Heart left ventricle (tissue), 16 donors: ENCODE measurements at regions of chr3 and their contacts with region 1.

Region 1: GRCh38 chr3:46976326-46977190 is at the start of gene CCDC12:
- DNase-seq: peak; percentile 93 to 97 (median 96)
- ATAC-seq: peak; percentile 89 to 93 (median 93)
- H3K4me3 ChIP-seq: peak within 1 kb of the TSS; percentile 50 to 88 (median 79)
- H3K27ac ChIP-seq: peak within 1 kb of the TSS; percentile 77 to 97 (median 92)
- H3K4me1 ChIP-seq: peaks cover 4 to 80% (median 51%) of the 10 kb centered on the region in 12 donors
- H3K27me3 ChIP-seq: no peaks in the 10 kb centered on the region
- CTCF ChIP-seq: no peak
- POLR2A ChIP-seq: peak in 1 of 2 donors; percentile 62
- total RNA-seq, gene CCDC12: 27.1 to 36.8 (median 33.3) TPM

Region 2: DNA sequence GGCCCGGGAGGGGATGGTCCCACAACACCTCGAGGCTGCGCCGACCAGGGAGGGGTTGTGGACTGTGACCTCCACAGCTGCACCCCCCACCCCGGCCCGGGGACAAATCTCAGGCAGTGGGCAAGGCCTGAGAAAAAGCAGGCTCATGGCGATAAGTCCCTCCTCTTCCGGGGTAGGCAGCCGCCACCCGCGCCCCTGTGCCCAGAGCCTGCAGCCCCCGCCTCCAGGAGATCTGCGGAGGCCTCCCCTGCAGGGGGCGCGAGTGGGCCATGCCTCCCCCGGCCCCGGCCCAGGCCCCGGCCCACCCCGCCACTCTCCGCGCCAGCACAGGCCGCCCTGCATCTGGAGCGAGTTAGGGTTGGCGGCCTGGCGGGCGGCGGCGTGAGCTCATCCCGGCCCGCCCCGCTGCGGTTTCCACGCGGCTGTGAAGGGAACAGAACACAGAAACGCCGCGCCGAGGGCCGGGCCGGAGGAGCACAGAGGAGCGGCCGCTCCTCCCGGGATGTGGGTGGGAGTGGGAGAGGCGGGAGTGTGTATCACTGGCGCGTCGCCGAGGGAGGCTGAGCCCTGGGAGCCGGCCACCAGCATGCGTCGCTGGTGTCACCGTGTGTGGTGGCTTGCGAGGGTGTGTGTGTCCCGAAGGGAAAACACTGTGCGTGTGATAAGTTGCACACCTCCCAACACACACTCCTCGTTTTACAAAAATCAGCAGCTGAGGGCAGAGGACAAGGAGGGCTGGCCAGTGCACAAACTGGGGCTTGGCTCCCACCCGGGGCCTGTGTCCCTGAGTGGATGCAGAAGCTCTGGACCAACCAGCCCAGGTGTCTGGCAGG is 130.6 kb before region 1 on chr3:
- intact Hi-C with region 1: no loop called
- DNase-seq: peak; percentile 71 to 90 (median 81)
- ATAC-seq: peak; percentile 6 to 54 (median 39)
- H3K4me3 ChIP-seq: peak overlapping the region; percentile 25 to 65 (median 52)
- H3K27ac ChIP-seq: peak overlapping the region in 11 of 12 donors; percentile 11 to 85 (median 77)
- H3K4me1 ChIP-seq: peaks cover 0 to 50% (median 31%) of the 10 kb centered on the region in 12 donors
- H3K27me3 ChIP-seq: no peaks in the 10 kb centered on the region
- CTCF ChIP-seq: peak; percentile 35 to 75 (median 56)
- POLR2A ChIP-seq: no peak

Region 3: GRCh38 chr3:46866720-46867549 is 109.6 kb before region 1 on chr3:
- intact Hi-C with region 1: loop called in 1 of 10 experiments (anchors 5 kb)
- DNase-seq: peak; percentile 80 to 93 (median 86)
- ATAC-seq: peak in 3 of 4 donors; percentile 8 to 32 (median 18)
- H3K4me3 ChIP-seq: no peak overlapping the region
- H3K27ac ChIP-seq: peak overlapping the region; percentile 63 to 100 (median 86)
- H3K4me1 ChIP-seq: peaks cover 13 to 78% (median 38%) of the 10 kb centered on the region in 12 donors
- H3K27me3 ChIP-seq: no peaks in the 10 kb centered on the region
- CTCF ChIP-seq: peak; percentile 83 to 93 (median 88)
- POLR2A ChIP-seq: no peak

Region 4: GRCh38 chr3:46923559-46924350 is 52.8 kb before region 1 on chr3:
- intact Hi-C with region 1: loop called in 4 of 10 experiments (anchors 2 to 5 kb)
- DNase-seq: peak in 2 of 5 donors; percentile 33 to 58
- ATAC-seq: peak; percentile 34 to 38 (median 36)
- H3K4me3 ChIP-seq: no peak overlapping the region
- H3K27ac ChIP-seq: peak overlapping the region in 1 of 12 donors; percentile 3
- H3K4me1 ChIP-seq: peaks cover 9 to 57% (median 49%) of the 10 kb centered on the region in 12 donors
- H3K27me3 ChIP-seq: no peaks in the 10 kb centered on the region
- CTCF ChIP-seq: peak; percentile 52 to 77 (median 64)
- POLR2A ChIP-seq: no peak

Region 5: DNA sequence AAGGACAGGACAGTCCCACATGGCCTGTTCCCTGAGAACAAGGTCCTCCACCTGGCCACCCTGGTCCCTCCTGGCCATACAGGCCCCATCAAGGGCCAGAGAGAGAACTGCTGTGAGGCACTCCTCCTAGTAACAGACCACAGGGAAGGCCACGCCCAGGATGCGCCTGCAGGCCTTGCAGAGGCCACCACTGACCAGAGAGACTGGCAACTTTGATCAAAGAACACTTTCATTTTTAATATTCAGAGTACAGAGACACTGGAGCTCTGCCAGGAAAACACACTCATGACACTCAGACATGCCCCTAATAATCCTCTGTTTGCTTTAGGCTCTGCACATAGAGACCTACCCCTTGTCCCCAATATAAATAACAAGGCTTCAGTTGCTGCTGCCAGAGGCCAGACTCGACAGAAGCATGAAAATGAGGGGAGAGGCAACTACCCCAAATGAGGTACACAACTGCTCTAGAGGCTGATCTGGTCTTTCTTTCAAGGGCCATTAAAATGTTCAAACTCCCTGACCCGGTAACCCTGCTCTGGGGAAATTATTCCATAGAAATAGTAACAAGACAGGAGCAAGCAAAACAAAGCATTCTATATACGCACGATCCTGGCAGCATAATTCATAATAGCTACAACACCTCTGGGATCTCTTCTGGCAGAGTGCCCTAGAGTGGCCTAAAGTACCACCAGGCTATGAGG is 44.8 kb before region 1 on chr3:
- intact Hi-C with region 1: loop called in 7 of 10 experiments (anchors 2 to 5 kb)
- DNase-seq: peak; percentile 57 to 86 (median 77)
- ATAC-seq: peak in 1 of 4 donors; percentile 7
- H3K4me3 ChIP-seq: no peak overlapping the region
- H3K27ac ChIP-seq: peak overlapping the region; percentile 26 to 94 (median 85)
- H3K4me1 ChIP-seq: peaks cover 23 to 100% (median 98%) of the 10 kb centered on the region in 12 donors
- H3K27me3 ChIP-seq: no peaks in the 10 kb centered on the region
- CTCF ChIP-seq: no peak
- POLR2A ChIP-seq: no peak

Region 6: GRCh38 chr3:46947981-46948791 is 28.4 kb before region 1 on chr3:
- intact Hi-C with region 1: loop called in 2 of 10 experiments (anchors 1 to 2 kb)
- DNase-seq: peak; percentile 60 to 87 (median 64)
- ATAC-seq: peak; percentile 72 to 87 (median 80)
- H3K4me3 ChIP-seq: peak overlapping the region in 1 of 12 donors; percentile 6
- H3K27ac ChIP-seq: peak overlapping the region; percentile 35 to 93 (median 84)
- H3K4me1 ChIP-seq: peaks cover 21 to 98% (median 85%) of the 10 kb centered on the region in 12 donors
- H3K27me3 ChIP-seq: no peaks in the 10 kb centered on the region
- CTCF ChIP-seq: no peak
- POLR2A ChIP-seq: no peak